PC-3 (cell line): ENCODE measurements at regions of chr13 and their contacts with region 1.

Region 1: DNA sequence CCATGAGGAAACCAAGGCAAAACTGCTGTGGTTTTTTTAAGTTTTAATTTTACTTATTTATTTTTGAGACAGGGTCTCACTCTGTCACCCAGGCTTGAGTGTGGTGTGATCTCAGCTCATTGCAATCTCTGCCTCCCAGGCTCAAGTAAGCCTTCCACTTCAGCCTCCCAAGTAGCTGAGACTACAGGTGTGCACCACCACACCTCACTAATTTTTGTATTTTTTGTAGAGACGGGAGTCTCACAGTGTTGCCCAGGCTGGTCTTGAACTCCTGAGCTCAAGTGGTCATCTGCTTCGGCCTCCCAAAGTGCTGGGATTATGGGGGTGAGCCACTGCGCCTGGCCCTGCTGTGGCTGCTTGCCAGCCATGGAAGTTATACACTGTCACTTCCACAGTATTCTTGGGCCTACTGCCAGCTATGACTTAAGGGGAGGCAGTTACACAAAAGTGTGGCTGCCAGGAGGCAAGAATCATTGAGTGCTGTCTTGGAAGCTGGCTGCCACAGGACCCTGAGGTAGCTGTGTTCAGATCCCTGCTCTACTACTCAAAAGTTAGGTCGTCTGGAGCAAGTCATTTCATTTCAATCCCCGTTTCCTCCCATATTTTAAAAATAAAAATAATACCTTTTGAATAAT is 12.7 kb downstream of the FARP1 start:
- DNase-seq: peak; percentile 45
- ATAC-seq: peak; percentile 33; the same call in 1 of the 2 replicates
- H3K4me3 ChIP-seq: no peak overlapping the region
- H3K27ac ChIP-seq: no peak overlapping the region
- H3K4me1 ChIP-seq: no peaks in the 10 kb centered on the region
- H3K27me3 ChIP-seq: no peaks in the 10 kb centered on the region
- CTCF ChIP-seq: no peak

Region 2: DNA sequence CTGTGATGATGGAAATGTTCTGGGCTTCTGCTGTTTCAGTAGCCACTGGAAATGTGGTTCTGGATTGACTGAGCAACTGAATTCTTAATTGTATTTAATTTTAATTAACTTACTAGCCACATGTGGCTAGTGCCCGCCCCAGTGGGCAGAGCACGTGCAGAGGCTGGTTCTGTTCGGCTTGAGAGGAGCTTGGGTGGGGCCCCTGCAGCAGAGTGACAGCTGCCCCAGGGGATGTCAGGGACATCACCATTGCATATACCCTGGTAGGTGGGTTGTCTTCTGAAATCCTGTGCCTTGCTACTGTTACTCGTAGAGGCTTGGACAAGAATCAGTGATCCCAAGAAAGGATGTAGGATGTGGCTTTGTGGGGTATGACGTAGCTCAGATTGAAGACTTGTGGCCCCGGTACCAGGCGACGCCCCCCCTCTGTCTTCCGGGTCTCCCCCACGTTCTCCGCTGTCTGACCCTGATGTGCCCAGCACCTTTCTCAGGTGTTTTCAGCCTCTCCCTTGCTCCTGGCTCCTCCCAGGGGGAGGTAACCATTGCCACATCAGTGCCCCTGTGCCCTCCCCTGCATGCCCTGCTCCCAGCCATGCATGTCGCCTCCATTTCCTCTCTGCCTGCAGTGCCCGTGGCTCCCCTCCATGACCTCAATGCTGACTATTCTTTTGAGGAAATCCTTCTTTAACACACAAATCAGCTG is 124.0 kb after region 1 on chr13:
- CTCF ChIA-PET with region 1: no interaction called
- POLR2A ChIA-PET with region 1: no interaction called
- intact Hi-C with region 1: loop called (anchors 10 kb)
- DNase-seq: no peak
- ATAC-seq: no peak
- H3K4me3 ChIP-seq: no peak overlapping the region
- H3K27ac ChIP-seq: no peak overlapping the region
- H3K4me1 ChIP-seq: peaks cover under 1% of the 10 kb centered on the region; the same call in 1 of the 2 replicates
- H3K27me3 ChIP-seq: no peaks in the 10 kb centered on the region
- CTCF ChIP-seq: no peak